ENCODE measurements at regions of chr6 and their contacts with region 1.

Region 1: GRCh38 chr6:16761471-16762267 is 409 bp upstream of the ATXN1 start:
- H3K4me3 Mint-ChIP-seq: peak overlapping the region; percentile 92
- H3K27ac Mint-ChIP-seq: peak overlapping the region; percentile 99
- H3K4me1 Mint-ChIP-seq: peaks cover 24% of the 10 kb centered on the region
- H3K27me3 Mint-ChIP-seq: no peaks in the 10 kb centered on the region

Region 2: GRCh38 chr6:16332175-16332542 is 429.5 kb before region 1 on chr6:
- intact Hi-C with region 1: loop called (anchors 5 kb)
- H3K4me3 Mint-ChIP-seq: no peak overlapping the region
- H3K27ac Mint-ChIP-seq: no peak overlapping the region
- H3K4me1 Mint-ChIP-seq: peaks cover 27% of the 10 kb centered on the region
- H3K27me3 Mint-ChIP-seq: no peaks in the 10 kb centered on the region

Region 3: DNA sequence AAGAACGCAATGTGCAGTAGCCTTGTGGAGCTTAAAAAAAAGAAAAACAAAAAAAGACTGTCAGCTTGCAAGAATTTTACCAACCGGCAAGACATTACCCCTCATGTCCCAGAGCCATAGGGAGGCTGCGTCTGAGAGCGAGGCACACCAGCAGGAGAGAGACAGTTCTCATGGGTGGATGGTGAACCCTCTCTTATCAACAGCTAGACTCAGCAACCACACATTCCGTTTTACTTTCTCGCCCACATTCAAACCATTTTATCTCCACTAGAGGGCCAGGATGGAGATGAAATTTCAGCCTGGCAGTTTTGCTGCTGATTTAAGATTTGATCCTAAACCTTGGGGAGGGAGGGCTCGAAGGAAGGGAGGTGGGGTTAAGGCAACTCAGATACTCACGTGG is 247.4 kb before region 1 on chr6:
- intact Hi-C with region 1: loop called (anchors 5 kb)
- H3K4me3 Mint-ChIP-seq: no peak overlapping the region
- H3K27ac Mint-ChIP-seq: peak overlapping the region; percentile 32
- H3K4me1 Mint-ChIP-seq: peaks cover 79% of the 10 kb centered on the region
- H3K27me3 Mint-ChIP-seq: no peaks in the 10 kb centered on the region

Region 4: DNA sequence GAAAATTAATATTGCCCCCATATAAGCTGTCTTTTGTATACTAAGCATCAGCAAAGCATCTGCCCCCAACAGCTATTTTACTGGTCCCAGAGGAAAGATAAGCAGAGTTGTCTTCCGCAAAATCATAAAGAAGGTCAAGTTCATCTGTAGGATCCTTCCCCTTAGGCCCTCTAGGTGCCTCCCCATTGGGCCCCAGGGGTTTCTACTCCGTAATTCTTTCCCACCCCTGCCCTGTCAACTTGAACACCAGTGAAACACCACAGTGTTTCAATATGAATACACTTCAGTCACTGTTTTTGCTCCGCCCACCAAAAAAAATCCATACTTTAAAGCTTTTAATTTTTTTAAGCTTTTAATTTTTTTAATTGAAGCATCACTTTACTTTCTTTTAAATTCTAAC is 159.6 kb before region 1 on chr6:
- intact Hi-C with region 1: no loop called
- H3K4me3 Mint-ChIP-seq: no peak overlapping the region
- H3K27ac Mint-ChIP-seq: no peak overlapping the region
- H3K4me1 Mint-ChIP-seq: peaks cover under 1% of the 10 kb centered on the region
- H3K27me3 Mint-ChIP-seq: no peaks in the 10 kb centered on the region

Region 5: GRCh38 chr6:16712931-16713484 is 48.7 kb before region 1 on chr6:
- intact Hi-C with region 1: loop called (anchors 1 kb)
- H3K4me3 Mint-ChIP-seq: peak overlapping the region; percentile 74
- H3K27ac Mint-ChIP-seq: peak overlapping the region; percentile 95
- H3K4me1 Mint-ChIP-seq: peaks cover 72% of the 10 kb centered on the region
- H3K27me3 Mint-ChIP-seq: no peaks in the 10 kb centered on the region

Region 6: DNA sequence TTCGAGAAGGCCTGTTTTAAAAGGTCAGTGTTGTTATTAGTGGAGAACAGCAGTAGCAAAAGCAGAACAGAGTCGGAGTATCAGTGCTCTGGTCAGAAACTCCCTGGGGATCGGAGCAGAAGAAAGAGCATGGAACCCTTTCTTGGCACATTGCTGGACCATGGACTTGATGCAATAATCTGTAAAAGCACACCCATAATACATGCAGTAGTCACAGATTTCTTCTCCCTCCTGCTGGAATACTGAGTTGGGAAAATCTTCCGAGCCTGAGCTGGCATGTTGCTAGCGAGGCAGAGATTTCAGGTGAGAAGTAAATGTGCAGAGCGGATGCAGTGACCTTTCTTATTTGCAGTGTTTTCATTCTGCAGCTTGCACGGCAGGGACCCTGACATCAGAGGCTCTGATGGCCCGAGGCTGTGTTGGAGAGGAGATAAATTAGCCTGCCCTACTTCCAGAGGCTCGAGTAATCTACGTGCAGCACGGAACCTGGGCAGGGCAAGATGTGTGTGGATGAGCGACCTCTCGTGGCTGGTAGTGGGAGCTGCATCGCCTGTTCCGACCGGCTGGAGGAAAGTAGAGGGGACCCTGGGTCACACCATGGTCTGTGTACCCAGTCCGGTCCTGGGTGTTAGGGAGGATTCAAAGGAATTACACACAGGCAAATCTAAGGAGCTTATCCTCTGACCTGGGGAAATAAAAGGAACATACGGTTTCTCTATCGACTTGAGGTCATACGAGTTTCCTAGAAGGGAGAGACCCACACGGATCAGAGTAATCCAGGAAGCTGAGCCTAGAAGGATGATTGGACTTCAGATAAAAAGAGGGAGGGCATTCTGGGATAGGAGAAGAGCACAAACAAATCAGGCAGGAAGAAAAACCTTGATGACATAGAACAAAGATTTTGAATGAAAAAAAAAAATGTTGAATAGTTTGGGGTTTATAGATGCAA is 203.2 kb after region 1 on chr6:
- intact Hi-C with region 1: loop called (anchors 2 kb)
- H3K4me3 Mint-ChIP-seq: peak overlapping the region; percentile 21
- H3K27ac Mint-ChIP-seq: peak overlapping the region; percentile 47
- H3K4me1 Mint-ChIP-seq: peaks cover 20% of the 10 kb centered on the region
- H3K27me3 Mint-ChIP-seq: peaks cover 13% of the 10 kb centered on the region